Mammary epithelial cell (primary cell): ENCODE measurements at regions of chr11 and their contacts with region 1.

Region 1: DNA sequence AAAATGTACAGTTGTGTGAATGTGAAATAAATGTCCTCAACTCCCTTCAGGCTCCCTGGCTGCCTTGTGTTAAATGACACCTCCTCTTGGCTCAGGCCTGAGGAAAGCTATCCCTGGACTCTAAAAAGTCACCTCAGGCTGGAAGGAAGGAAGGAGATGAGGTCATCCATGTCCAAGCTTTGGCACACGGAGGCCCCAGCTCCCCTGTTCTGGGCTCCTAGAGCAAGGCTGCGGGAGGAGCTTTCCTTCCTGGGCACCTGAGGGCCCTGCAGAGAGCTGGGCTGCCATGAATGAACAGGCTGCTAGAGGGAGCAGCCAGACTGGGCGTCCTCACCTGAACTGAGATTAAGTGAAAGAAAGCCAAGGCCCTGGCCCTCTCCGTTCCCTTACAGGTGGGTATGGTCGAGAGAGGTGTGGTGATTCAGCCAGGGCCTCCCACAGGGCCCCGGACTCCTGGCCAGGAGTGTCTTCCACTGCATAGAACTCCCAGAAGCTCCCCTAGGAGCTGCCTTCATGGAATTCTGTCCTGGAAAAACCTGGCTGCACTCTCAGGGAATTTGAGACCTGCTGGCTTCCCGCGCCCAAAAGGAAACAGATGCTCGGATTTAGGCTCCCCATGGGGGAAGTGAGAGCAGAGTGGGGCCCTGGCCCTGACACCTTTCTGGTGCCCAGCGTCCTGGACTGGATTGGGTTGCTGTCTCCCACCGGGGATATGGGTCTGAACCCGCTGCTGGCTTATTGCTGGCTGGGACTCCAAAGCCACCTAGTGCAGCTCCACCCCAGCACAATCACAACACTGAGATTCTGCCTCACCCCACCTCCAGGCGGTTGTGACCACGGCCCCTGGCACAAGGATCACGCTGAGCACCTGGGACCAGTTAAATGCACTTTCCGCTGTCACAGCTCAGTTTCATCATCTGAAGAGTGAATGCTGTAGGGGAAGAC is 22.2 kb downstream of the MYBPC3 start:
- DNase-seq: no peak
- H3K4me3 ChIP-seq: no peak overlapping the region
- H3K27ac ChIP-seq: no peak overlapping the region
- H3K4me1 ChIP-seq: no peaks in the 10 kb centered on the region
- H3K27me3 ChIP-seq: no peaks in the 10 kb centered on the region
- CTCF ChIP-seq: peak in 1 of 2 donors; percentile 3

Region 2: GRCh38 chr11:47276923-47277322 is 53.3 kb before region 1 on chr11:
- CTCF ChIA-PET with region 1: no interaction called
- dilution Hi-C with region 1: loop called (anchors 5 kb)
- in situ Hi-C with region 1: no loop called
- intact Hi-C with region 1: no loop called
- DNase-seq: no peak
- H3K4me3 ChIP-seq: no peak overlapping the region
- H3K27ac ChIP-seq: no peak overlapping the region
- H3K4me1 ChIP-seq: no peaks in the 10 kb centered on the region
- H3K27me3 ChIP-seq: no peaks in the 10 kb centered on the region
- CTCF ChIP-seq: no peak

Region 3: DNA sequence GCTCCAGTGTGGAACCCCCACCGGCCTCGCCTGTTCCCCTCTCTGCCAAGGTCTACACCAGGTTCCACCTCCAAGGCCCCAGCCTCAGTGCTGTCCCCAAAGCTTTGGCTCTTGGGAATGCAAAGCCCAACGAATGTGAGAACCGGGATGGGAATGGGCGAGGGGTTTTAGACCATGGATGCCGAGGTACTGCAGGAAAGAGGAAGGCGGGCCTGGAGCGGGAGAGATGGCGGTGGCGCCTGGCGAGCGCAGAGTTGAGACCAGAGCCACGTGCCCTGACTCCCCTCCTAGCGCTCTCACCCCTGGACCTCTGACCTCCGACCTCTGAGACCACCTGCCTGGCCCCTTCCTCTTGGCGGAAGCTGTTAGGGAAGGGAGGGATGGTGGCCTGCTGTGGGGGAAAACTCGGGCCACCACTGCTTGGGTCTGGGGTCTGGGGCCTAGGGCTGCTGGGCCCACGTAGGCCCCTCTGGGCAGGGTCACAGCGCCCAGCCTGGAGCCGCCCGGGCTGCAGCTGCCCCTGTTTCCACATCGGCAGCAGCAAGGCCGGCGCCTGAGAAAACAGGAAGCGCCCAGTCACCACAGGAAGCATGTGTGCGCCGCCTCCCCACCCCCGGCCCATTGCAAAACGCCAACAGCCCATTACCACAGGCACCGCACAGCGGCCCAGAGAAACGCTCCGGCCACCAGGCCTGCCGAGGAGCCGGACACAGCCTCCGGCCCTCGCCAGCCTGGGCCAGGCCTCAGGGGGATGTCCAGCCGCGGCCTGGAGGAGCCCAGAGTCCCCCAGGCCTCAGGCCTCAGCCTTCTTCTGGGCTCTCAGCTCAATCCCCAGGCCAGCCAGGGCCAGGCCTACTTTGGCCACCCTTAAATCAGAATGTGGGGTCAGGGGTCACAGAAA is 64.3 kb after region 1 on chr11:
- CTCF ChIA-PET with region 1: no interaction called
- dilution Hi-C with region 1: loop called (anchors 5 kb)
- in situ Hi-C with region 1: no loop called
- intact Hi-C with region 1: no loop called
- DNase-seq: no peak
- H3K4me3 ChIP-seq: no peak overlapping the region
- H3K27ac ChIP-seq: no peak overlapping the region
- H3K4me1 ChIP-seq: peaks cover 8% of the 10 kb centered on the region
- H3K27me3 ChIP-seq: no peaks in the 10 kb centered on the region
- CTCF ChIP-seq: no peak